Esophagus muscularis mucosa (tissue), 4 donors: ENCODE measurements at regions of chr5 and their contacts with region 1.

Region 1: DNA sequence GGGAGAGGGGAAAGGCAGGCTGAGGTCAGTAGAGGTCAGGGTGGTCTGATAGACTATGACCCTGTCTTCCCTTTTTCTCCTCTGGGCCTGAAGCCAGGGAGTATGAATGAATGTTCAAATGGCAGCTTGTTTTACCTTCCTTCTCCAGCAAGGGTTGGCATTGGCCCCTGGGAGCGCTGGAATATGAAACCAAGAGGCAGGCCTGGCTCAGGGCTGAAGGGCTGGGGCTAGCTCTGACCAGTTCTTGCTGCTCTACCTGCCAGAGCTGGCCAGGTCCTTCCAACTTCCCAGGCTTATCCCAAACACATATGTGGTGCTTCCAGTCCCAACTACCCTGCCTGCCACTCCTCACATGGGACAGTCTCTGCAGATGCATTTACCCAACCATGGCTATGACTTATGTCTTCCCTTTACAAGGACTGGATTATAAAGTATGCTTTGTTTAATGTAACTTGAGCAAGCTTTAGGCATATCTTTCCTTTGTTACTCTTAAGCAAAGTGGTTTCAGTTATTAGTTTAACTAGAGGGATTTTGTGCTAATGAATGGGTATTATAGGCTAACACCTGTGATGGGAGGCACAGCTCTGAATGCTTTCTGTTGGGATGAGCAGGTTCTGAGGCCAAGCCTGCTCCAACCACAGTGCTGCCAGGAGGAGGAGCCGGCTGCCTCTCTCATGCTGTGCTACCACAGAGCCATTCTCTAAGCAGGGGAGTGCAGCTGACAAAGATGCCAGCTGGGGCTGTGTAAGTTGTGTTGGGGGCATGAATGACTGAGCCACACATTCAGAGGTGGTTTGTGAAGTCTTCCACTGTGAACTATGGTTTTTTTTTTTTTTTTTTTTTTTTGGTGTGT is 6.1 kb downstream of the CCNI2 start:
- DNase-seq: no peak
- H3K4me3 ChIP-seq: no peak overlapping the region
- H3K27ac ChIP-seq: no peak overlapping the region
- H3K4me1 ChIP-seq: no peaks in the 10 kb centered on the region
- H3K27me3 ChIP-seq: peaks cover 0 to 5% (median 0%) of the 10 kb centered on the region in 4 donors
- CTCF ChIP-seq: no peak
- EP300 ChIP-seq: no peak
- POLR2A ChIP-seq: no peak

Region 2: GRCh38 chr5:132378580-132378979 is 374.8 kb before region 1 on chr5:
- intact Hi-C with region 1: no loop called
- DNase-seq: no peak
- H3K4me3 ChIP-seq: no peak overlapping the region
- H3K27ac ChIP-seq: no peak overlapping the region
- H3K4me1 ChIP-seq: peaks cover 9 to 19% (median 14%) of the 10 kb centered on the region in 4 donors
- H3K27me3 ChIP-seq: no peaks in the 10 kb centered on the region
- CTCF ChIP-seq: no peak
- EP300 ChIP-seq: no peak
- POLR2A ChIP-seq: no peak

Region 3: GRCh38 chr5:132607095-132607494 is 146.3 kb before region 1 on chr5:
- intact Hi-C with region 1: no loop called
- DNase-seq: no peak
- H3K4me3 ChIP-seq: no peak overlapping the region
- H3K27ac ChIP-seq: no peak overlapping the region
- H3K4me1 ChIP-seq: no peaks in the 10 kb centered on the region
- H3K27me3 ChIP-seq: no peaks in the 10 kb centered on the region
- CTCF ChIP-seq: no peak
- EP300 ChIP-seq: no peak
- POLR2A ChIP-seq: no peak

Region 4: DNA sequence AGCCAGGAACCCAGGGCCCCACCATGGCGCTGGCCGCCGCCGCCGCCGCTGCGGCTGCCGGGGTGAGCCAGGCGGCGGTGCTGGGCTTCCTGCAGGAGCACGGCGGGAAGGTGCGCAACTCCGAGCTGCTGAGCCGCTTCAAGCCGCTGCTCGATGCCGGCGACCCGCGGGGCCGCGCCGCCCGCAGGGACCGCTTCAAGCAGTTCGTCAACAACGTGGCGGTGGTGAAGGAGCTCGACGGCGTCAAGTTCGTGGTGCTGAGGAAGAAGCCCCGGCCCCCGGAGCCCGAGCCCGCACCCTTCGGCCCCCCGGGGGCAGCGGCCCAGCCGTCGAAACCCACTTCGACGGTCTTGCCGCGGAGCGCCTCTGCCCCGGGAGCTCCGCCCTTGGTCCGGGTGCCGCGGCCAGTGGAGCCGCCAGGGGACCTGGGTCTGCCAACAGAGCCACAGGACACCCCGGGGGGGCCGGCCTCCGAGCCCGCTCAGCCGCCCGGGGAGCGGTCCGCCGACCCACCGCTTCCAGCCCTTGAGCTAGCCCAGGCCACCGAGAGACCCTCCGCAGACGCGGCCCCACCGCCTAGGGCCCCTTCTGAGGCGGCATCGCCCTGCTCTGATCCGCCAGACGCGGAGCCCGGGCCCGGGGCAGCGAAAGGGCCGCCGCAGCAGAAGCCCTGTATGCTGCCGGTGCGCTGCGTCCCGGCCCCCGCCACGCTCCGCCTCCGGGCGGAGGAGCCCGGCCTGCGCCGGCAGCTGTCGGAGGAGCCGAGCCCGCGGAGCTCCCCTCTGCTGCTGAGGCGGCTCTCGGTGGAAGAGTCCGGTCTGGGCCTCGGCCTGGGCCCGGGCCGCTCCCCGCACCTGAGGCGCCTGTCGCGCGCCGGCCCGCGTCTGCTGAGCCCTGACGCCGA is 60.5 kb after region 1 on chr5:
- intact Hi-C with region 1: loop called (anchors 10 kb)
- DNase-seq: no peak
- H3K4me3 ChIP-seq: peak overlapping the region; percentile 47 to 55 (median 48)
- H3K27ac ChIP-seq: no peak overlapping the region
- H3K4me1 ChIP-seq: peaks cover 14 to 26% (median 22%) of the 10 kb centered on the region in 4 donors
- H3K27me3 ChIP-seq: peaks cover 0 to 58% (median 33%) of the 10 kb centered on the region in 4 donors
- CTCF ChIP-seq: no peak
- EP300 ChIP-seq: no peak
- POLR2A ChIP-seq: no peak